ENCODE measurements at regions of chr5 and their contacts with region 1.

Region 1: DNA sequence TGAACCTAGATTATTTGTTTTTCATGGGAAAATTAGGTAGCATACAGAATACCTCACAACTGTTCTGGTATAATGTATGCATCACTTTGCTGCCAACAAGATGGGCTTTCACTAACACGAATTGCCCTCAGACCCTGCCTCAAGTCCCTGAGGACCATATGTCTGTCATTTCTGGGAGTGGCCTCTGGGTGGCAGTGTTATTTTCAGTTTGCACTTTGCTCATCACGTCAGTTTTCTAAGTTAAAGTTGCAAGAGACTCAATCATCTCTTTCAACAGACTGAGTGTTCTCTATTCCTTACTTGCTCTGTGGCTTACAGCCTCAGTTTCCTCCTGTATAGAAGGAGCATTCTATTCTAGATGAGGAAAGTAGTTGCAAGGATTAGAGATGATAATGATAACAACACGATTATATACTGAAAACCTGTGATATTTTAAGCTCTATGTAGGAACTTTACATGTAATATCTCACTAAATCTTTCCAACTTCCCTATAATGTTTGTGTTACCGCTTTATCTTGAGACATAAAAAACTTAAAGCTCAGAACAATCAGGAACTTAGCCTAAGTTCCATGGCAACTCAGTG is 55.7 kb downstream of the TSSK1B start:
- DNase-seq: peak in 1 of 2 donors; percentile 24
- H3K4me3 ChIP-seq: no peak overlapping the region
- H3K27ac ChIP-seq: no peak overlapping the region
- H3K4me1 ChIP-seq: no peaks in the 10 kb centered on the region
- H3K27me3 ChIP-seq: no peaks in the 10 kb centered on the region
- CTCF ChIP-seq: peak; percentile 39 to 53 (median 53)
- POLR2A ChIP-seq: no peak

Region 2: DNA sequence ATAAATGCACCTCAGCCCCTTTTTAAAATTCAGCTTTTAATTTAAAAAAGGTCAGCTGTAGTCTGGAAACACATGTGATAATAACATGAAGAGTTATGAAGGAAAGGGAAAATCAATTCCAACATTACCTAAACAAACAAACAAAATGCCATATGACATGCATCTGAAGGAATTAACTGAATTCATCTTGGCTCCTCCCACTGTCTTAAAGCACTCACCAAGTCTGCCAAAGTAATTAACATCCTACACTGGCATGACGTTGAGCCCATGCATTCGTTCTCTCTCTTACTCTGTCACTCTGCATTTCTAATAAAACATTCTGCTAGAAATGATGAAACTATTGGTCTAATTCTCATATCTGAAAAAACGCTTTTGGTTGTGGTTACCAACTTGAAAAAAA is 18.0 kb after region 1 on chr5:
- intact Hi-C with region 1: no loop called
- DNase-seq: no peak
- H3K4me3 ChIP-seq: no peak overlapping the region
- H3K27ac ChIP-seq: no peak overlapping the region
- H3K4me1 ChIP-seq: no peaks in the 10 kb centered on the region
- H3K27me3 ChIP-seq: no peaks in the 10 kb centered on the region
- CTCF ChIP-seq: no peak
- POLR2A ChIP-seq: no peak

Region 3: GRCh38 chr5:113507601-113508000 is 128.6 kb after region 1 on chr5:
- intact Hi-C with region 1: loop called (anchors 10 kb)
- DNase-seq: no peak
- H3K4me3 ChIP-seq: no peak overlapping the region
- H3K27ac ChIP-seq: no peak overlapping the region
- H3K4me1 ChIP-seq: no peaks in the 10 kb centered on the region
- H3K27me3 ChIP-seq: no peaks in the 10 kb centered on the region
- CTCF ChIP-seq: no peak
- POLR2A ChIP-seq: no peak

Measured in breast epithelium (tissue), 4 donors.